Lower leg skin (tissue), 4 donors: ENCODE measurements at regions of chr19 and their contacts with region 1.

Region 1: GRCh38 chr19:43450545-43450997 is 14.8 kb downstream of the LYPD3 start:
- DNase-seq: no peak
- H3K4me3 ChIP-seq: no peak overlapping the region
- CTCF ChIP-seq: no peak
- POLR2A ChIP-seq: no peak

Region 2: GRCh38 chr19:43408043-43408442 is 42.5 kb before region 1 on chr19:
- intact Hi-C with region 1: no loop called
- DNase-seq: peak in 1 of 2 donors; percentile 40
- H3K4me3 ChIP-seq: no peak overlapping the region
- CTCF ChIP-seq: no peak
- POLR2A ChIP-seq: no peak

Region 3: GRCh38 chr19:43765109-43765876 is 314.7 kb after region 1 on chr19:
- intact Hi-C with region 1: loop called (anchors 10 kb)
- DNase-seq: peak; percentile 71 to 93
- H3K4me3 ChIP-seq: no peak overlapping the region
- CTCF ChIP-seq: no peak
- POLR2A ChIP-seq: no peak